IMR-90 (cell line): ENCODE measurements at regions of chr5 and their contacts with region 1.

Region 1: DNA sequence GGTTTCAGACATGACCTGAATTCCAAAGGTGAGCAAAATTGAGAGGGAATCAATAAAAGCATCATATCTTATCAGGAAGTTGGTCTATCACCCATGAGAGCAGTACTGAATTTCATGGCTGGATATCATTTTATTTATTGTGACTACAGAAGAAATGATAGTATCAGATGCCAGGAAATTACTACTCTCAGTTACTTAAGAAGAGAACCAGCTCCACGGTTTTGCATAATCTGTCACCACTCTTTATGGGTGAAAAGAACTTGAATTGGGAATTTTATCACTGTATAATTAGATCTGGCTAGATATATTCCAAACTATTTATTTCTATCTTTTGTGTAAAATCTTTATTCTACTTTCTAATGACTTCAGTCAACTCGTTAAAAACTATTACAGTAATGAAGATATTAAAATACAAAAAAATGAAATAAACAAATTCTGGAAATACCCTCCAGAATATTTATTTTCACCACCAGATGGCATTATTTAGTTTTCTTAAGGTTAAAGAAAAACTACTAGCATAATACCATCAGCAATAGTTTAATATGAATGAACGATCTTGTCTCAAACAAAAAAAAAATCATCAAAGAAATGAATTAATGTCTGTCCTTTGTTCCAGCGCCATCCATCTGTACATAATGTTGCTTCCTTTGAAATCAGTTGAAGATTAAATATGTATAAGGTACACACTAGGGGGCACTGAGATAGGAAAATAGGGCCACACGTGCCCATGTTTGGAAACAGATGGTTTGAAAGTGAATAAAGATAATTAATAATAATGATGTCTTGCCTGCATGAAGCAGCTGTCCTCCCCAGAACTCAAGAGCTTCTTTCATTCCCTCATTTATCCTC is 84.7 kb upstream of the SLCO6A1 start:
- DNase-seq: peak; percentile 18
- ATAC-seq: no peak
- H3K4me3 ChIP-seq: no peak overlapping the region
- H3K27ac ChIP-seq: no peak overlapping the region
- H3K4me1 ChIP-seq: no peaks in the 10 kb centered on the region
- H3K27me3 ChIP-seq: no peaks in the 10 kb centered on the region; the same call in 1 of the 2 replicates
- CTCF ChIP-seq: peak; percentile 50
- POLR2A ChIP-seq: no peak
- RAD21 ChIP-seq: peak; percentile 38

Region 2: GRCh38 chr5:101717721-101718120 is 865.8 kb before region 1 on chr5:
- CTCF ChIA-PET with region 1: no interaction called
- POLR2A ChIA-PET with region 1: no interaction called
- dilution Hi-C with region 1: no loop called
- in situ Hi-C with region 1: no loop called
- intact Hi-C with region 1: no loop called
- DNase-seq: no peak
- ATAC-seq: no peak
- H3K4me3 ChIP-seq: no peak overlapping the region
- H3K27ac ChIP-seq: no peak overlapping the region
- H3K4me1 ChIP-seq: no peaks in the 10 kb centered on the region
- H3K27me3 ChIP-seq: no peaks in the 10 kb centered on the region
- CTCF ChIP-seq: no peak
- POLR2A ChIP-seq: no peak
- RAD21 ChIP-seq: no peak

Region 3: GRCh38 chr5:102654559-102655349 is 71.3 kb after region 1 on chr5:
- CTCF ChIA-PET with region 1: no interaction called
- POLR2A ChIA-PET with region 1: no interaction called
- dilution Hi-C with region 1: no loop called
- in situ Hi-C with region 1: no loop called
- intact Hi-C with region 1: loop called (anchors 5 kb)
- DNase-seq: no peak
- ATAC-seq: no peak
- H3K4me3 ChIP-seq: no peak overlapping the region
- H3K27ac ChIP-seq: no peak overlapping the region
- H3K4me1 ChIP-seq: no peaks in the 10 kb centered on the region
- H3K27me3 ChIP-seq: peaks cover 3% of the 10 kb centered on the region; the same call in 1 of the 2 replicates
- CTCF ChIP-seq: no peak
- POLR2A ChIP-seq: no peak
- RAD21 ChIP-seq: no peak

Region 4: DNA sequence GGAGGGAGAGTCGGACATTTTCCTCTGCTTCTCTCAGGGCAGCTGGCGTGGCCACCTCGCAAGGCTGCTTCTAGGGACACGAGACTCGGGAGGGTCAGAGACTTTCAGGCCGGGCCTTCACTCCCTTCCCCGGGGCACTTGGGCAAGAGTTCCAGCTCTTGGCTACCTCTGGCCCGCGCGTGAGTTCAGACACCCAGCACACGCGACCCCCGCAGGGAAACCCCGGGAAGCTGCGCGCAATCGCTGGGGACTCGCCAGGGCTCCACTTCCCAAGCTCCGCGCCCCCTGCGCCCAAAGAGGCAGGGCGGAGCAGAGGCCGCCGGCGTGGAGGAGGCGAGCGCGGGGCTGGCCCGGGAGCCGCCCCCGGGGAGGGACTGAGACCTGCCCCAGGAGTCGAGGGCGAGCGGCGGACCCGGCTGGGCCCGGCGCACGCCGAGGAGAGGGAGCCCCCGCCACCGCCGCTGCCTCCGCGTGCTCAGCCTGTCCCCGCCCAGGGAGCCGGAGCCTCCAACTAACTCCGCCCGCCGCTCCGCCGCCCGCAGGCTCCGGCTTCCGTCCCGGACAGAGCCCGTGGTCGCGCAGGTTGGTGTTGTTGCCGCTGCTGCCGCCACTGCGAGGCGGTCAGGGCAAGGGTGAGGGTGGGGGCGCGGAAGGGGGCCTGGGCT is 171.4 kb after region 1 on chr5 and contains the start of gene PAM:
- CTCF ChIA-PET with region 1: no interaction called
- POLR2A ChIA-PET with region 1: no interaction called
- dilution Hi-C with region 1: no loop called
- in situ Hi-C with region 1: no loop called
- intact Hi-C with region 1: no loop called
- DNase-seq: peak; percentile 62
- ATAC-seq: peak; percentile 89
- H3K4me3 ChIP-seq: peak within 1 kb of the TSS; percentile 59
- H3K27ac ChIP-seq: peak within 1 kb of the TSS; percentile 44
- H3K4me1 ChIP-seq: peaks cover 7% of the 10 kb centered on the region
- H3K27me3 ChIP-seq: no peaks in the 10 kb centered on the region
- CTCF ChIP-seq: no peak
- POLR2A ChIP-seq: peak; percentile 60; the same call in 1 of the 2 replicates
- RAD21 ChIP-seq: no peak
- total RNA-seq, gene PAM: 112 and 115 TPM in 2 replicates

Region 5: GRCh38 chr5:102971697-102972293 is 388.3 kb after region 1 on chr5:
- CTCF ChIA-PET with region 1: no interaction called
- POLR2A ChIA-PET with region 1: no interaction called
- dilution Hi-C with region 1: no loop called
- in situ Hi-C with region 1: no loop called
- intact Hi-C with region 1: loop called (anchors 5 kb)
- DNase-seq: peak; percentile 70
- ATAC-seq: peak; percentile 86
- H3K4me3 ChIP-seq: no peak overlapping the region
- H3K27ac ChIP-seq: no peak overlapping the region
- H3K4me1 ChIP-seq: peaks cover 6% of the 10 kb centered on the region
- H3K27me3 ChIP-seq: no peaks in the 10 kb centered on the region
- CTCF ChIP-seq: peak; percentile 62
- POLR2A ChIP-seq: no peak
- RAD21 ChIP-seq: peak; percentile 60

Region 6: GRCh38 chr5:103139264-103139865 is 555.9 kb after region 1 on chr5:
- CTCF ChIA-PET with region 1: interaction called, 3 read pairs
- POLR2A ChIA-PET with region 1: no interaction called
- dilution Hi-C with region 1: no loop called
- in situ Hi-C with region 1: loop called (anchors 10 kb)
- intact Hi-C with region 1: loop called (anchors 1 kb)
- DNase-seq: peak; percentile 68
- ATAC-seq: peak; percentile 97
- H3K4me3 ChIP-seq: no peak overlapping the region
- H3K27ac ChIP-seq: no peak overlapping the region
- H3K4me1 ChIP-seq: no peaks in the 10 kb centered on the region
- H3K27me3 ChIP-seq: no peaks in the 10 kb centered on the region
- CTCF ChIP-seq: peak; percentile 91
- POLR2A ChIP-seq: no peak
- RAD21 ChIP-seq: peak; percentile 95

Region 7: DNA sequence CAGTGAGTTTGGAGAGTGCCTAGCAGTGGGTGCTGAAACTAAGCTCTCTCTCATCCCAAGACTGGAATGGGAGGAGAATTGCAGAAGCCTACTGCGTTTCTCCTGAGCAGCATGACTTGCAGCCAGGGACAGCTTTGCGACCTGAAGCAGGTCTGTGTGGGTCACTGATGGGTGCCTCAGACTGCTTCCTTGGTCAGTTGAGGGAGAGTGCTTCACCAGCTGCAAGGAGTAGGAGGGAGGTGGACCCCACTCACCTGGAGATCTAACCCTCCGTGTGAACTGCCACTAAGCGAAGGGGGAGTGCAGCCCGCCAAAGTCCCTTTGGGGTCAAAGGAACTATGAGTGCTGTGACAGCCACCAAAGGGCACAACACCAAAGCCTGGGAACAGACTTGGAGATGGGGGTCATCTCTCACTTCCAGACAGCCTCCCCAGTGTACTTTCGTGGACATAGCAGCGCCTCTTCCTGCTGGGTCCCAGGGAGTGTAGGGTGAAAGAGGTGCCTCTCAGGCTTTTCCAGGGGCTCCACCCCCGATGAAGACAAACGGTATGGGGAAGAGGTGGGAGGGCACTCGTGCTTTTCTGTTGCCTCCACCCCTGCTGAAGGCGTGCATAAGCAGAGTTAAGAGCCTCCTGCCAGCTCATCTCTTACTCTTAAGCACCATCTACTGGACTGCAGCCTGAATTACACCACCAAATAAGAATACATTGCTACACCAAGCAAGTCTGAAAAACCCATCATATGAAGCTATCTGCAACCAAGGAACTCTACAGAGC is 640.8 kb after region 1 on chr5:
- CTCF ChIA-PET with region 1: no interaction called
- POLR2A ChIA-PET with region 1: no interaction called
- dilution Hi-C with region 1: no loop called
- in situ Hi-C with region 1: no loop called
- intact Hi-C with region 1: loop called (anchors 2 kb)
- DNase-seq: peak; percentile 75
- ATAC-seq: peak; percentile 100
- H3K4me3 ChIP-seq: no peak overlapping the region
- H3K27ac ChIP-seq: no peak overlapping the region
- H3K4me1 ChIP-seq: no peaks in the 10 kb centered on the region
- H3K27me3 ChIP-seq: no peaks in the 10 kb centered on the region
- CTCF ChIP-seq: peak; percentile 78
- POLR2A ChIP-seq: no peak
- RAD21 ChIP-seq: peak; percentile 75